ENCODE measurements at regions of chr2 and their contacts with region 1.

Region 1: DNA sequence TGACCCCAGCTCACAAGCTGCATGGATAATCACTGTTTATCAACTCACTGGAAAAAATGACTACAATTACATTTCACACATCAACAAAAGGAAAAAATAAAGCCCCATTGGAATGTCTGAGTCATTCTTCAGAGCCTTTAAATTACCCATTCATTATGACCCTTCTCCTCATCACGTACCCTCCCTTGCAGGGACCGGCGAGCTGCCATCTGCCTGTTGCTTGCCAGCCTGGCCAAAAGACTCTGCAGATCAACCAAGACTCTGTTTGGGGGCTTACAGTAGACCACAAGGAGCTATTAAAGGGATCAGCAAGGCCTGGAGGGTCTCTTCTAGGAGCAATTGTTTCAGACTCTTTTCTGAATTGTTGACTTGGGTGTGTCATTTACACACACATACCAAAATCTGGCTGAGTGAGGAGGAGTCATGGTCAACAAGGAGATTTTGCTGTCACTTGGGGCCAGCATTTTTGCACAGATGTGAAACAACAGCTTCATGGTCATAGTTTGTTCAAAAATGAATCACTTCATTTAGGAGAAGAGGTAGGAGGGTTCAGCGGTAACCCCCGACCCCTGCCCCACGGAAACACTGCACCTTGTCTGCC is 42.0 kb downstream of the LBH start:
- DNase-seq: peak; percentile 79
- ATAC-seq: peak; percentile 40
- H3K4me3 ChIP-seq: peak overlapping the region; percentile 17; the same call in 1 of the 2 replicates
- H3K27ac ChIP-seq: peak overlapping the region; percentile 73
- H3K4me1 ChIP-seq: peaks cover 26% of the 10 kb centered on the region
- H3K27me3 ChIP-seq: no peaks in the 10 kb centered on the region
- CTCF ChIP-seq: no peak

Region 2: DNA sequence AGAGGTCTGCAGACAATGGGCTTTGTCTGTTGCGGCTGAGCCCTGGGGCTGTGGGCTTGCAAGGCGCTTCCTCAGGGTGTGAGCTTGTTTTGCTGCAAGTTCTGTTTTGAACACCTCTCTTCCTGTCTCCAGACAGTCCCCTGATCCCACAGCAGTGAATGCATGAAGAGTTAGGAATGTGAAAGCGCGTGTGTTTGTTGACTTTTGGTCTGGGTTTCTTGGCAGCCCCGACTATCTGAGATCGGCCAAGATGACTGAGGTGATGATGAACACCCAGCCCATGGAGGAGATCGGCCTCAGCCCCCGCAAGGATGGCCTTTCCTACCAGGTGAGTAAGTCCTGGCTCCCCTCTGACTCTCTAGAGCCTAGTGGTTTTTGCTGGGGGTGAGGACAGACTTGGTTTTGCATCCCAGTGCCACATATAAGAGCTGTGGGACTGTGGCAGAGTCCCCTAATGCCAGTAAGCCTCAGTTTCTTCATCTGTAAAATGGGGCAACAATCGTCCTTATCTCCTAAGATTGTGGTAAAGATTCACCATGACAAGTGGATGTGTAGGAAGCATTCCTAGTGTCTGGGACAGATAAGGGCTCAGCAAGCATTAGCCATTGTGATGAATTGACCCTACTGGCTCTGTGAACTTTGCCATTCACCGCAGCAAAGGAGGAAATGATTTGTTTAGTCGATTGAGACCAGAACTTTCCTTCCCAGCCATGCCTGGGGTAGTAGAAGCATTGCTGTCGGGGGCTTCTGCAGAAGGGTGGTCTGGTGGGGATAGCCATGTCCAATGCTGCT is 39.0 kb before region 1 on chr2:
- CTCF ChIA-PET with region 1: no interaction called
- POLR2A ChIA-PET with region 1: no interaction called
- intact Hi-C with region 1: loop called (anchors 2 kb)
- DNase-seq: peak; percentile 94
- ATAC-seq: peak; percentile 75
- H3K4me3 ChIP-seq: no peak overlapping the region
- H3K27ac ChIP-seq: no peak overlapping the region
- H3K4me1 ChIP-seq: peaks cover 33% of the 10 kb centered on the region
- H3K27me3 ChIP-seq: peaks cover 36% of the 10 kb centered on the region
- CTCF ChIP-seq: no peak

Measured in PC-3 (cell line).